ENCODE measurements at regions of chr1 and their contacts with region 1.

Region 1: GRCh38 chr1:37995751-37996345 is 6.0 kb upstream of the SF3A3 start:
- DNase-seq: no peak
- ATAC-seq: peak; percentile 55
- H3K4me3 Mint-ChIP-seq: peak overlapping the region; percentile 64
- H3K27ac Mint-ChIP-seq: peak overlapping the region; percentile 89
- H3K4me1 Mint-ChIP-seq: peaks cover 50% of the 10 kb centered on the region
- H3K27me3 Mint-ChIP-seq: no peaks in the 10 kb centered on the region

Region 2: DNA sequence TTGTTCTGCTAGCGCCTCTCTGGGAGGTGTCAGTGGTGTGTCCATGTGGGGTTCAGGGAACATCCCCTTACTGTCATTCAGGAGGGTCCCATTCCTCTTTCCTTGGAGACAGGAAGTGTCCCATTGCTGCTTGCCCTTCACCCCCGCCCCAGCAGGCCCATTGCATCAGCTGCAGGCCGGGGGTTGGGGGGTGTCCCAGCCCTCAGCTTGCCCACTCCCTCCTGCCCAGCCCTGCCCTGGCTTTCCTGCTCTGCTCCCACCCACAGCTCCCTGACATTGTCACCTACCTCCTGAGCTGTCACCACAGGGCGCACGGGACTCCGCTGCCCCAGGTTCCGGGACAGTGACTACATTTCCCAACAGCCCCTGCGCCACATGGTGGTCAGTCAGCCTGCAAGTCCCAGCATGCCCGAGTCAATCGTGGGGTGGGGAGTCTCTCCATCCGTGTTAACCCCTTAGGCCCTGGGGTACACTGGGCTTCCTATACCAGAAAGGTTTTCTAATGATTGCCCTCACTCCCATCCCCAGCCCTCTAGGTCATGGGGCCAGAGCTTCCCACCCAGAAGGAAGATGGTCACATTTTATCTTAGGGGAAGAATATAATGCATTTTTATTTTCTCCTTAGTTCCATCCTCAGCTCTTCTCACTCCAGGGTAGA is 49.0 kb before region 1 on chr1 and contains the start of gene INPP5B:
- CTCF ChIA-PET with region 1: no interaction called
- POLR2A ChIA-PET with region 1: no interaction called
- DNase-seq: peak; percentile 89
- ATAC-seq: peak; percentile 97
- H3K4me3 Mint-ChIP-seq: peak within 1 kb of the TSS; percentile 92
- H3K27ac Mint-ChIP-seq: peak within 1 kb of the TSS; percentile 97
- H3K4me1 Mint-ChIP-seq: peaks cover 30% of the 10 kb centered on the region
- H3K27me3 Mint-ChIP-seq: no peaks in the 10 kb centered on the region
- total RNA-seq, gene INPP5B: 40.2 to 41.1 TPM

Region 3: DNA sequence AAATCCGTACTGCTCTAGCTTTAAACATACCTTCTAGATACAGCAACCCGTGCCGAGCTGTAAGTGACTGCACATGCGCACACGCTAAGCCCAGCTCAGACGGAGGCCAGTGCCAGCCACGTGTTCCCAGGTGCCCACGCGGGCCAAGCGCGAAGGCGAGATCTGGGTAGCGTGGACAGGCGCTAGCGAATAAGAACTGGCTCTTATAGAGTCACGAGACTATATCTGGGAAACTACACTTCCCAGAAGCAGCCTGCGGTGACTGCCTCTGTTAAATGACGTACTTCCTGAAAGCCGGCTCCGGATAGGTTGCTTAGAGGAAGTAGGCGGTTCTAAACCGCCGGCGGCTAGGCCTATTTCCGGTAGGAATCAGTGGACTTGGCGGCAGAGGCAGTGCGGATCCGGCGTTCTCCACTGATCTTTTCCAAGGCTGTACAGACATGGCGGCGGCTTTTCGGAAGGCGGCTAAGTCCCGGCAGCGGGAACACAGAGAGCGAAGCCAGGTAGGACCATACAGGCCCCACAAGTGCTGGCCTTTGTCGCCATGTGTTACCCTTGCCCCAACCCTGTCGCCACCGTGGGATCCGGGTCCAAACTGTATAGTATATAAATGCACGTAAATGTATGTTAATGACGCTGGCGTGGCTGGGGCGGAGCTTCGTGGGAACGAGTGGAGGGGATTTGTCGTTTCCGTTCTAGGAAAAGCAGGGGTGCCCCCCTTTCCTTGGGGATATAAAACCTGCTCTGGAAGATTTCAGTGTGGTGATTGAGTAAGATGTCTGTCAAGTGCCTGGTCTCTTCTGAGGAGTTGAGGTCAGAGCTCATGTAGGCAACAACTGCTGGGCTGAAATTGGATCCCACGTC is 16.7 kb after region 1 on chr1 and contains the start of gene UTP11:
- CTCF ChIA-PET with region 1: interaction called, 215 read pairs
- POLR2A ChIA-PET with region 1: interaction called, 24 read pairs
- DNase-seq: peak; percentile 96
- ATAC-seq: peak; percentile 92
- H3K4me3 Mint-ChIP-seq: peak within 1 kb of the TSS; percentile 98
- H3K27ac Mint-ChIP-seq: peak within 1 kb of the TSS; percentile 97
- H3K4me1 Mint-ChIP-seq: peaks cover 55% of the 10 kb centered on the region
- H3K27me3 Mint-ChIP-seq: no peaks in the 10 kb centered on the region
- total RNA-seq, gene UTP11: 39.0 to 39.5 TPM

Region 4: DNA sequence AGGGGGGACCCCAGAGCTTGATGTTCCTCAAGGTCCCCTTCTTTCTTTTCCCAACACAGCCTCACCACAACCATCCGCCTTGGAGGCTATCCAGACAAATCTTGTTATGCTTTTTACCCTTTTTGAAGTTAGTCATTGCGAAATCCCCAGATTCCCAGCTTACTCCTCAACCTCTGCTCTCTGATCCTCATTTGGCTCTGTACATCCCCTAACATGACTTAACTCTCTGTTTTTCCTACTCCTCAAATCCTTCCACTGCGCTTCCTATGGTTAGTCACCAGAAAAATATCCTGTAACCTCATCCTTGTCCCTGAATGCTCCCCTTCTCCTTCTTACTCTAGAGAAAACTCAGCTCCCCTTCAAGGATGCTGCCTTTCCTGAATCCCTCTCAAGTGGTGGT is 239.9 kb after region 1 on chr1:
- CTCF ChIA-PET with region 1: no interaction called
- POLR2A ChIA-PET with region 1: no interaction called
- DNase-seq: no peak
- ATAC-seq: no peak
- H3K4me3 Mint-ChIP-seq: no peak overlapping the region
- H3K27ac Mint-ChIP-seq: no peak overlapping the region
- H3K4me1 Mint-ChIP-seq: no peaks in the 10 kb centered on the region
- H3K27me3 Mint-ChIP-seq: peaks cover 3% of the 10 kb centered on the region

Measured in activated CD8-positive, alpha-beta T cell treated with anti-CD3 and anti-CD28 coated beads, Interleukin-2, amount 10 ng/mL, durations not matched to agents 7 days and 5 days (primary cell).